MCF 10A (cell line): ENCODE measurements at regions of chr5 and their contacts with region 1.

Region 1: GRCh38 chr5:165227511-165227910 is 1722.1 kb downstream of the MAT2B start:
- DNase-seq: peak; percentile 54
- H3K4me3 Mint-ChIP-seq: no peak overlapping the region
- H3K27ac Mint-ChIP-seq: no peak overlapping the region
- H3K4me1 Mint-ChIP-seq: no peaks in the 10 kb centered on the region
- H3K27me3 Mint-ChIP-seq: no peaks in the 10 kb centered on the region
- CTCF ChIP-seq: peak; percentile 40

Region 2: DNA sequence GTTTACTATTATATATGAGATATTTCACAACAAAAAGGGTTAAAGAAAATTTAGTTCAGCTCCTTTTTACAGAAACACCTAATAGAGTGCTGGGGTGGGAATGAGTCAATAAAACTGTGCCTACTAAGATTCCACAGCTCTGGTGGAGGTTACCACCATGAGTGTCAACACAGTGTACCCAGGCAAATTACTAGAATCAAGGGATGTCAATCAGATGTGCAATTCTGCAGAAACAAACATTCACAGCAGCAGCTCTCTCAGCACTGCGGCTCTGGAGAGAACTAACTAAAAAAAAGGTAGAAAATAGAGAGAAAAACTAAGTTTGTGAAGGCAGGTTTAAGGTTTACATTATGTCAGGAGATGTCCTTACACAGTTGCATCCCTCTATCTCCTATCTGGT is 409.1 kb before region 1 on chr5:
- CTCF ChIA-PET with region 1: no interaction called
- POLR2A ChIA-PET with region 1: no interaction called
- intact Hi-C with region 1: no loop called
- DNase-seq: no peak
- H3K4me3 Mint-ChIP-seq: no peak overlapping the region
- H3K27ac Mint-ChIP-seq: no peak overlapping the region
- H3K4me1 Mint-ChIP-seq: no peaks in the 10 kb centered on the region
- H3K27me3 Mint-ChIP-seq: no peaks in the 10 kb centered on the region
- CTCF ChIP-seq: no peak

Region 3: DNA sequence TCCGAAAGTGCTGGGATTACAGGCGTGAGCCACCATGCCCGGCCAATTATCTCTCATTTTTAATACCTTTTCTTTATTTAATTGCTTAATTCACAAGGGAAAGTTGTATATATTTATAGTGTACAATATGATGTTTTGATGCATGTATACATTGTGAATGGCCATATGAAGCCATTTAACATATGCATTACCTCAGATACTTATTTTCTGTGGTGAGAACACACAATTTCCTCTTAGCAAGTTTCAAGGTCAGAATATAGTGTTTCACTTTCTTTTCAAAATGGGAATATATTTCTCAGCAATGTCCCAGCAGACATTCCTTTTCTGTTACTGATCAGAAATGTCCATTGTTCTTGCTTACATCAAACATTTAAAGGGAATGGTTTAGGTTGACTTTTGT is 125.8 kb before region 1 on chr5:
- CTCF ChIA-PET with region 1: no interaction called
- POLR2A ChIA-PET with region 1: no interaction called
- intact Hi-C with region 1: no loop called
- DNase-seq: no peak
- H3K4me3 Mint-ChIP-seq: no peak overlapping the region
- H3K27ac Mint-ChIP-seq: no peak overlapping the region
- H3K4me1 Mint-ChIP-seq: no peaks in the 10 kb centered on the region
- H3K27me3 Mint-ChIP-seq: no peaks in the 10 kb centered on the region
- CTCF ChIP-seq: no peak

Region 4: GRCh38 chr5:165277661-165278060 is 50.1 kb after region 1 on chr5:
- CTCF ChIA-PET with region 1: no interaction called
- POLR2A ChIA-PET with region 1: no interaction called
- intact Hi-C with region 1: no loop called
- DNase-seq: no peak
- H3K4me3 Mint-ChIP-seq: no peak overlapping the region
- H3K27ac Mint-ChIP-seq: no peak overlapping the region
- H3K4me1 Mint-ChIP-seq: no peaks in the 10 kb centered on the region
- H3K27me3 Mint-ChIP-seq: no peaks in the 10 kb centered on the region
- CTCF ChIP-seq: no peak

Region 5: GRCh38 chr5:165457859-165458481 is 230.5 kb after region 1 on chr5:
- CTCF ChIA-PET with region 1: interaction called, 5 read pairs
- POLR2A ChIA-PET with region 1: no interaction called
- intact Hi-C with region 1: loop called (anchors 1 kb)
- DNase-seq: peak; percentile 79
- H3K4me3 Mint-ChIP-seq: no peak overlapping the region
- H3K27ac Mint-ChIP-seq: no peak overlapping the region
- H3K4me1 Mint-ChIP-seq: peaks cover 11% of the 10 kb centered on the region
- H3K27me3 Mint-ChIP-seq: no peaks in the 10 kb centered on the region
- CTCF ChIP-seq: peak; percentile 80

Region 6: GRCh38 chr5:165616490-165617430 is 389.2 kb after region 1 on chr5:
- CTCF ChIA-PET with region 1: interaction called, 3 read pairs
- POLR2A ChIA-PET with region 1: no interaction called
- intact Hi-C with region 1: loop called (anchors 1 kb)
- DNase-seq: peak; percentile 74
- H3K4me3 Mint-ChIP-seq: no peak overlapping the region
- H3K27ac Mint-ChIP-seq: no peak overlapping the region
- H3K4me1 Mint-ChIP-seq: peaks cover 22% of the 10 kb centered on the region
- H3K27me3 Mint-ChIP-seq: no peaks in the 10 kb centered on the region
- CTCF ChIP-seq: peak; percentile 26